ENCODE measurements at regions of chr12 and their contacts with region 1.

Region 1: DNA sequence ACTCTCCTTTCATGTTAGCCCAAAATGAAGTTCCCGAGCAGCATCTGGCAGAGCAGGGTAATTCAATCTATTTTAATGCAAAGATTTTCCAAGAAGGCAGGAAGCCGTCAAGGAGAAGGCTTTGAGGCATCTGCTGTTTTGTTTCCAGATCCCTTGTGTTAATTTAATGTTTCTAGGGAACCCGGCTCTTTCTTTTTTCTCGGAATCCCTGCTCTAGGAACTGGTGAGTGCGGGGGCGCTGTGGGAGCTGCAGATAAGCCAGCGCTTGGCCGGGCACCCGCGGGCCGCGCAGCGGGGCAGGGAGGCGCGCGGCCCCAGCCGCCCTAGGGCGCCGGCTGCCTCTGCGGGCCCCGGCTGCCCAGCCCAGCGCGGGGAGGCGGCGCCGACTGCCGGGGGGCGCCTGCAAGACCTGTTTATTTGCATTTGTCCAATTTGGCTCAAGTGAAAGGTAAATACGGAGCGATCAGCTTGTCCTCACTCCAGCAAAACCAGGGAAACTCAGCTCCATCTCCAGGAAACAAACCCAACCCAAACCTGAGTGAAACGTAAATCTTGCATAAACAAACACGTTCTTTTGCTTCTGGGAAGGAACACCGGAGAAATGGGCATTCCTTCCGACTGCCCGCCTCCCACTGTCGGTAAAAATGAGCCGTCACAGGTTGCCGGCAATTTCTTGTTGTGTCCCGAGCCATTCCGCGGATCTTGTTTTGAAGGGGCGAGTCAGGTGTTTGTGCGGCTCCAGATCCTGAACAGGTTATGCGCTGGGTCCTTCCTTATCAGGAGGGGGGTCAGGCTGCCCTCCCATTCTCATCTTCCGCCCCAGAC is 65.1 kb downstream of the CRADD start:
- DNase-seq: peak; percentile 70
- H3K4me3 ChIP-seq: peak overlapping the region; percentile 30 to 68 (median 50)
- H3K27ac ChIP-seq: peak overlapping the region; percentile 80 to 90 (median 90)
- H3K4me1 ChIP-seq: peaks cover 5 to 54% (median 26%) of the 10 kb centered on the region in 4 donors
- H3K27me3 ChIP-seq: no peaks in the 10 kb centered on the region
- CTCF ChIP-seq: peak in 4 of 5 experiments; percentile 7 to 29 (median 22)
- EP300 ChIP-seq: peak; percentile 93
- POLR2A ChIP-seq: no peak

Region 2: DNA sequence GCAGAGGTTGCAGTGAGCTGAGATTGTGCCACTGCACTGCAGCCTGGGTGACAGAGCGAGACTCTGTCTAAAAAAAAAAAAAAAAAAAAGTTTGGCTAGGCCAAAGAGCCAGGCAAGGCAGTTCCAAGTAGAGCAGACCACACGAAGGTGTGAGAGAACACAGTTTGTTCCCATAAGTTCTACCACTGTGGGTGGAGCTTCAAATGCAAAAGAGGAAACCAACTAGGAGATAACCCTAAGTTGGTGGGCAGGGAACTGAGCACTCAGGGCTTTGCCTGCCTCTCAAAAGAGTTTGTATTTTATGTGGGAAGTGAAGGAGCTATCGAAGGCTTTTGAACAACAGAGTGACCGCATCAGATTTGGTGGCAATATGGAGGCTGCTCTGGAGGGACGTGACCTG is 154.7 kb before region 1 on chr12:
- in situ Hi-C with region 1: loop called in 1 of 4 experiments (anchors 10 kb)
- intact Hi-C with region 1: no loop called
- DNase-seq: no peak
- H3K4me3 ChIP-seq: no peak overlapping the region
- H3K27ac ChIP-seq: no peak overlapping the region
- H3K4me1 ChIP-seq: peaks cover 0 to 10% (median 0%) of the 10 kb centered on the region in 4 donors
- H3K27me3 ChIP-seq: peaks cover under 1% of the 10 kb centered on the region
- CTCF ChIP-seq: no peak
- EP300 ChIP-seq: no peak
- POLR2A ChIP-seq: no peak

Region 3: GRCh38 chr12:93778306-93778705 is 36.0 kb after region 1 on chr12:
- in situ Hi-C with region 1: no loop called
- intact Hi-C with region 1: loop called (anchors 1 kb)
- DNase-seq: no peak
- H3K4me3 ChIP-seq: no peak overlapping the region
- H3K27ac ChIP-seq: peak overlapping the region; percentile 66 to 82 (median 76)
- H3K4me1 ChIP-seq: peaks cover 10 to 37% (median 13%) of the 10 kb centered on the region in 4 donors
- H3K27me3 ChIP-seq: no peaks in the 10 kb centered on the region
- CTCF ChIP-seq: no peak
- EP300 ChIP-seq: no peak
- POLR2A ChIP-seq: no peak